HCT116 (cell line): ENCODE measurements at regions of chr7 and their contacts with region 1.

Region 1: DNA sequence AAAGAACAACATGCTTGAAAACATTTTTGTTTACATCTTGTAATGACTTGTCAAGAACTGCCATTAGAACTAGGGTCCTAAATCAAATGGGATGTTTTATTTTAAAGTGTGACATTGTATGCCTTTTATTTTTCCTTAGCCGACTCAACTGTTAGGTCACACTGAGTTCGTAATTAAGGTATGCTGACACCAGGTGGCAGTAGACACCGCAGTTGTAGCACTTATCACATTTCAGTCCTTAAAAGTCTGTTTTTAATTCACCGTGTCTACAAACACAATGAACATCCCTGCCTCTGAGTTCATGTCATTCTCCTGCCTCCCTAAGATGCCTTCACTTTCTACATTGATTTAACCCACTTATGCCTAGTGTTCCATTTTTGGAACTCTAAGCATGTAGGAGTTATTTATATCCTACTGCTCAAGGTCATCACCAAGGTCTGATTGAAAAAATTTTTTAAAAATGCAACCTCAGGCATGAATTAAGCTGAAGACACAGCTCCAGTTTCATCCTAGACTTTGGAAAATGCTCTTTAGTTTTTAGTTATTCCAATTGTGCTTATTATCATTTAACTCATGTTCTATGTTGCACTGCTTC is 186.1 kb downstream of the BMPER start:
- DNase-seq: peak; percentile 43
- ATAC-seq: peak; percentile 66
- H3K4me3 ChIP-seq: no peak overlapping the region
- H3K27ac ChIP-seq: no peak overlapping the region
- H3K4me1 ChIP-seq: no peaks in the 10 kb centered on the region
- H3K27me3 ChIP-seq: no peaks in the 10 kb centered on the region
- CTCF ChIP-seq: peak; percentile 56 to 80 (median 64); a peak in 5 of 6 replicates
- POLR2A ChIP-seq: no peak
- RAD21 ChIP-seq: peak; percentile 82

Region 2: DNA sequence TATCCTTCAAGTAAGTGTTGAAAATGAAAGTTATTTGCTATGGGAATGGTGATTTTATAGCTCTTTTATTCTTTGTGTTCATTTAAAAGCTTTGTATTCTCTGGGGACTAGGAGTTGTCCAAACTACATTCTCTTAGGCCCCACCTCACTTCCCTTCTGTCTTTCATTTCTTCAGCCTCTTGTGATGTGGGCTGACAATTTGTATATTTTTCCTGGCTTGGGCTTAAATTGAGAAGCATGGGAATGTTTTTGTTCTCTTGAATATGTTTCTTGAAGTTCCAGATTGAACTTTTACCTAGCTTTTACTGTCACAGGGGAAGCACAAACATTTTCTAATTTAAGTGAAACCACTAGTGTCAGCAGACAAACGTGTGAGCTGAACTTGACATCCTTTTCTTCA is 934.1 kb before region 1 on chr7:
- CTCF ChIA-PET with region 1: no interaction called
- POLR2A ChIA-PET with region 1: no interaction called
- RAD21 ChIA-PET with region 1: no interaction called
- intact Hi-C with region 1: no loop called
- DNase-seq: no peak
- ATAC-seq: no peak
- H3K4me3 ChIP-seq: no peak overlapping the region
- H3K27ac ChIP-seq: no peak overlapping the region
- H3K4me1 ChIP-seq: no peaks in the 10 kb centered on the region
- H3K27me3 ChIP-seq: no peaks in the 10 kb centered on the region
- CTCF ChIP-seq: no peak
- POLR2A ChIP-seq: no peak
- RAD21 ChIP-seq: no peak

Region 3: GRCh38 chr7:33185786-33186185 is 905.6 kb before region 1 on chr7:
- CTCF ChIA-PET with region 1: interaction called, 17 read pairs
- POLR2A ChIA-PET with region 1: no interaction called
- RAD21 ChIA-PET with region 1: interaction called in 1 of 2 experiments, 3 read pairs
- intact Hi-C with region 1: loop called (anchors 1 kb)
- DNase-seq: peak; percentile 34
- ATAC-seq: peak; percentile 91
- H3K4me3 ChIP-seq: no peak overlapping the region
- H3K27ac ChIP-seq: no peak overlapping the region
- H3K4me1 ChIP-seq: no peaks in the 10 kb centered on the region
- H3K27me3 ChIP-seq: no peaks in the 10 kb centered on the region
- CTCF ChIP-seq: peak; percentile 49 to 81 (median 65); a peak in 5 of 6 replicates
- POLR2A ChIP-seq: no peak
- RAD21 ChIP-seq: peak; percentile 88

Region 4: DNA sequence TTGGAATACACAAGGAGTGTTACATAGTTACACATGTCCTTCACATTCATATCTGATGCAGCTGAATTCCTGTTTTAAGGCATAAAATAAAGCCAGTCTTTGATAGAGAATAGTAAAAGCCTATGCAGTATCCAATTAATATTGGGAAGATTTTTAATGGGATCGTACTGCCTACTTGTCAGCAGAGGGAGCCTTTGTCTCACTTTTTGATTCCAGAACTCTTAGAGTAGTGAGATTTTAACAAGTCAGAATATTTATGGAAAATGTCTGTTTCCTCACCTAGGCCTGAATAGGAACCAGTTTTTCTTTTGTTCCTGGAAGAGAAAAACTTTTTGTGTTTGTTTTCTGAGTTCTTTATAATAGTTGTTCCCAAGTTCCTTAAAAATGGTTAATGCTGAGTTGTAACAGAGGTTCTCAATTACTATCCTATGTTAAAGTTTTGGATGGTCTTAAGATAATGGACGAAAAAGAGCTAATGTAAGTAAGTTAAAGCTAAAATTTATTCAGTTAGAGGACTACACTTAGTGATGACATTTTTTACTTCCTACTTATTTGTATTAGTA is 848.0 kb before region 1 on chr7:
- CTCF ChIA-PET with region 1: interaction called, 6 read pairs
- POLR2A ChIA-PET with region 1: no interaction called
- RAD21 ChIA-PET with region 1: no interaction called
- intact Hi-C with region 1: loop called (anchors 2 kb)
- DNase-seq: peak; percentile 26
- ATAC-seq: peak; percentile 85
- H3K4me3 ChIP-seq: no peak overlapping the region
- H3K27ac ChIP-seq: no peak overlapping the region
- H3K4me1 ChIP-seq: no peaks in the 10 kb centered on the region
- H3K27me3 ChIP-seq: no peaks in the 10 kb centered on the region
- CTCF ChIP-seq: peak; percentile 57 to 76 (median 66)
- POLR2A ChIP-seq: no peak
- RAD21 ChIP-seq: peak; percentile 75

Region 5: DNA sequence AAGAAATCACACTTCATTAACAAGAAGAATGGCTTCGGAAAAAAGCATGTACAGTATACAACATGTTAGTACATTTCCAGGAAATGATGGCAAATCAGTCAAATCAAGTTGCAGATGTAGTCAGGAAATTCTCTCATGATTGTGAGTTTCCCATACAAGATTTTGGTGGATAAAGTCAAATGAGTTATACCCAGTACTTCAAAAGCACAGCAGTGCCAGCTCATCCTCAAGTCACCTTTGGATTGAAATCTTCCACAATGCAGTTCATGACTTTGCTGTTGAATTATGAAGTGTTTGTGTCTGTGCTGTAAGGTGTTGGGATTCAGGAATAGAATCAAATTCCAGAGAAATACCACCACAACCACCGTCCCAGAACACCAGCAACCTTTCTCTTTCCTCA is 487.4 kb before region 1 on chr7:
- CTCF ChIA-PET with region 1: no interaction called
- POLR2A ChIA-PET with region 1: no interaction called
- RAD21 ChIA-PET with region 1: no interaction called
- intact Hi-C with region 1: no loop called
- DNase-seq: no peak
- ATAC-seq: no peak
- H3K4me3 ChIP-seq: no peak overlapping the region
- H3K27ac ChIP-seq: no peak overlapping the region
- H3K4me1 ChIP-seq: no peaks in the 10 kb centered on the region
- H3K27me3 ChIP-seq: no peaks in the 10 kb centered on the region
- CTCF ChIP-seq: no peak
- POLR2A ChIP-seq: no peak
- RAD21 ChIP-seq: no peak

Region 6: GRCh38 chr7:33982425-33982786 is 109.0 kb before region 1 on chr7:
- CTCF ChIA-PET with region 1: interaction called, 89 read pairs
- POLR2A ChIA-PET with region 1: interaction called, 3 read pairs
- RAD21 ChIA-PET with region 1: interaction called, 14 to 21 read pairs
- intact Hi-C with region 1: loop called (anchors 1 kb)
- DNase-seq: peak; percentile 33
- ATAC-seq: 0 out of 2 replicates have a peak, but pooled peaks have one; percentile 19
- H3K4me3 ChIP-seq: no peak overlapping the region
- H3K27ac ChIP-seq: no peak overlapping the region
- H3K4me1 ChIP-seq: peaks cover 8 to 27% of the 10 kb centered on the region in 2 experiments
- H3K27me3 ChIP-seq: no peaks in the 10 kb centered on the region
- CTCF ChIP-seq: peak; percentile 60 to 64 (median 64); a peak in 5 of 6 replicates
- POLR2A ChIP-seq: no peak
- RAD21 ChIP-seq: peak; percentile 74

Region 7: GRCh38 chr7:34107276-34107675 is 15.9 kb after region 1 on chr7:
- CTCF ChIA-PET with region 1: no interaction called
- POLR2A ChIA-PET with region 1: no interaction called
- RAD21 ChIA-PET with region 1: no interaction called
- intact Hi-C with region 1: no loop called
- DNase-seq: no peak
- ATAC-seq: no peak
- H3K4me3 ChIP-seq: no peak overlapping the region
- H3K27ac ChIP-seq: no peak overlapping the region
- H3K4me1 ChIP-seq: no peaks in the 10 kb centered on the region
- H3K27me3 ChIP-seq: no peaks in the 10 kb centered on the region
- CTCF ChIP-seq: no peak
- POLR2A ChIP-seq: no peak
- RAD21 ChIP-seq: no peak

Region 8: GRCh38 chr7:34430458-34430857 is 339.0 kb after region 1 on chr7:
- CTCF ChIA-PET with region 1: no interaction called
- POLR2A ChIA-PET with region 1: no interaction called
- RAD21 ChIA-PET with region 1: no interaction called
- intact Hi-C with region 1: loop called (anchors 1 kb)
- DNase-seq: peak; percentile 4
- ATAC-seq: peak; percentile 83
- H3K4me3 ChIP-seq: no peak overlapping the region
- H3K27ac ChIP-seq: no peak overlapping the region
- H3K4me1 ChIP-seq: no peaks in the 10 kb centered on the region
- H3K27me3 ChIP-seq: no peaks in the 10 kb centered on the region
- CTCF ChIP-seq: peak; percentile 63 to 75 (median 73)
- POLR2A ChIP-seq: no peak
- RAD21 ChIP-seq: peak; percentile 78